Heart right ventricle (tissue), 16 donors: ENCODE measurements at regions of chr16 and their contacts with region 1.

Region 1: GRCh38 chr16:30005341-30006094 is 5.3 kb downstream of the DOC2A start:
- DNase-seq: no peak
- ATAC-seq: peak in 7 of 8 donors; percentile 42 to 73 (median 66)
- H3K4me3 ChIP-seq: no peak overlapping the region
- H3K27ac ChIP-seq: no peak overlapping the region
- H3K4me1 ChIP-seq: peaks cover 0 to 13% (median 4%) of the 10 kb centered on the region in 9 donors
- H3K27me3 ChIP-seq: peaks cover 13 to 28% (median 25%) of the 10 kb centered on the region in 7 donors
- CTCF ChIP-seq: peak; percentile 77 to 88 (median 84)

Region 2: GRCh38 chr16:29857133-29857760 is 148.3 kb before region 1 on chr16:
- intact Hi-C with region 1: loop called in 4 of 10 experiments (anchors 5 to 10 kb)
- DNase-seq: no peak
- ATAC-seq: no peak
- H3K4me3 ChIP-seq: no peak overlapping the region
- H3K27ac ChIP-seq: no peak overlapping the region
- H3K4me1 ChIP-seq: peaks cover 8 to 32% (median 19%) of the 10 kb centered on the region in 9 donors
- H3K27me3 ChIP-seq: no peaks in the 10 kb centered on the region
- CTCF ChIP-seq: no peak